Left colon (tissue), 2 donors: ENCODE measurements at regions of chr1 and their contacts with region 1.

Region 1: DNA sequence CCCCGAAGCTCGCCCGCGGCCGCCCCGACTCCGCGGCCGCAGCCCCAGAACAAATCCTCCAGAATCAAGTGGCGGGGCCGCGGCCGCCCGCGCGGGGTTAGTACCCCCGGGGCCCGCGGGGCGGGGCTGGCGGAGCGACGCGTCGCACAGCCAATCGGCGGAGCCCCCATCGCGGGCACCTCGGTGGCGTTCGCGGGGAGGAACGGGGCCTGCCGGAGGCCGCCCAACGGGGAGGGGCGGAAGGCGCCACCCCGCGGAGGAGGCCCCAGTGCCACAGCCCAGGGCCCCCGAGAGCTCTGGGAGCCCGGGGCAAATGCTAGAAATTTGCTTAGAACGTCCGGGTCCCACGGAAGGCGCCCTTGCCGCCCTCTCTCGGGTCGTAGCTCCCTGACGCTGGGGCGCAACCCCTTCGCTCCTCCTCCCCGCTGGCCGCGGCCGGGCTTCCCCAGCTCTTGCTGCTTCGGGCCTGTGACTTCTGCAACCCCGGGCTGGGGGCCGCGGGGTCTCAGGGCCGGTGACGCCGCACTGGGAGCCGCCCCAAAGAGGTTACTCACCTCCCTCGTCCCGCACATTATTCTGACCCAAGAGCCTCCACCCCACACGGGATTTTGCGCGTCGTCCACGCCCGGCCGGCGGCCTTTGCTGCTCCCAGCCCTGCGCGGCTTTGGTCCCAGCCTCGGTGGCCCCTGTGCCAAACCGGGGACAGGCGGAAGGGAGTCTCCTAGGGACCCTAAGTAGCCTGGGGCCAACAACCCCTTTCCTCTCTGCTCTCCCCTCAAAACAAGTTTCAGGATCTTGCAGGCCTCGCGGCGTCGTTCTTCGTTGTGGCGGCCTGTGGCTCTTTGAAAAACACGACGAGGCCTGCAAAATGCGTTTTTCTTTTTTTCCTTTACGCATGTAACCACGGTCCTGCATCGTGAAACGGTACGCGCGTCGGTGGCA is at the start of gene RUNX3:
- DNase-seq: peak; percentile 60 to 78
- ATAC-seq: peak; percentile 50
- total RNA-seq, gene RUNX3: 1.6 to 5.7 TPM

Region 2: DNA sequence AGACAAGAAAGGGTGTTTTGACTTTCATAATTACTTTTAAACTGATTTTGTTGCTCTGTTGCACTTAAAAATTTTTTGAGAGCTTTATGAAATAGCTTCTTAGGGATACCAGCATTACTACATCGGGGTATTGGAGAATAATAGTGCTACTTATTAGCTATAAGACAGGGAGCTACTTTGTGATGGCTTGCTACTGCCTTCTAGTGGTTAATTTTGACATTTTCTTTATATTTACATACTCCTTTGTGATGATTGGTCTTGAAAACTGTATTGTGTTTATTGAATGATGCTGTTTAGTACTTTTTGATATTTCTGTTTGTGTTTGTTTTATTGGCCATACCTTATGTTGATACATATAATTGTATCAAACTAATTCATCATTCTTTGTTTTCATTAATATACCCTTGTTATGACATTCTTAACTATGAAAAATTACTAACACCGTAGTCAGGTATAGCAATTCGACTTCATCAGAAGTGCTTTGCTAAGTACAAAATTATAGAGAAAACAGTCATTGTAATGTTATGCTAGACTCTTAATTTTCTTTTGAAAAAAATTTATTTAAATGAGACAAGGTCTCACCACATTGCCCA is 99.7 kb before region 1 on chr1:
- intact Hi-C with region 1: no loop called
- DNase-seq: no peak
- ATAC-seq: peak; percentile 50

Region 3: DNA sequence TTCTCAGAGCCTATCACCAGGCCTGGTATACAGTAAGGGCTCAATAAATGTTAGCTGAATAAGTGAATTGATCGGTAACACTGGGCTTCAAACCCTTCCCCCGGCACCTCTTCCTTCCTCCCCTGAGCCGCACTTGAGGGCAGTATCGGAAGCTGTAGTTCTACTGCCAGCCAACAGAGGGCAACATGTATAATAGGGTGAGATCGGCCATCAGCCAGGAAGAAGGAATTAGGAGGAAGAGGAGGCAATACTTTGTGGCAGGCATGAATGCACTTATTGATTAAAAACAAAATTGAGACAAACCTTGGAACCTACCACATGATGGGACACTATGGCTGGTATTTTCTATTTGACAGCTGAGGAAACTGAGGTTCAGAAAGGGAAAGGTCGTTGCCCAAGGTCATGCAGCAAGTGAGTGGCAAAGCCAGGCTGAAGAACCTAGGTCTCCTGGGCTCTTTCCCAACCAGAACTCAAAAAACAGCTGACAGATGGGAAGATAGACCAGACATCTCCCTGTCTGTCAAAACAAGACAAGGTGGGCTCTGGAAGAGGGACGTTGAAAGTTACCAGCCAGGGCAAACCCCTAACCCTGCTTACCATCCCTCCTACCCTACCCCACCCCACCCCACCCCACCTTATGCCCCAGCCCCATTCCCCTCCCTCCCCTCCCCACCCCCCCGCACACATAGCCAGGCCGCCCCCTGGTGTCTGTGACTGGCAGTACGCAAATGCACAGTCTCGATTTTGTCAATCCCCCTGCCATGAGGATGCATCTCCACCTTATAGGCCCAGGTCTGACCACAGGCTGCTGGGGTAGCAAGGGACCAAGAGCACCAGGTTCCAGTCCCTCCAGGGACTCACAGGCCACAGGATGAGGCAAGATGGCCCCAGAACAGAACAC is 106.9 kb after region 1 on chr1:
- intact Hi-C with region 1: loop called (anchors 10 kb)
- DNase-seq: peak in 1 of 2 donors; percentile 55
- ATAC-seq: peak; percentile 56

Region 4: GRCh38 chr1:25204797-25205480 is 274.5 kb after region 1 on chr1:
- intact Hi-C with region 1: loop called in 1 of 2 experiments (anchors 10 kb)
- DNase-seq: no peak
- ATAC-seq: peak; percentile 33

Region 5: DNA sequence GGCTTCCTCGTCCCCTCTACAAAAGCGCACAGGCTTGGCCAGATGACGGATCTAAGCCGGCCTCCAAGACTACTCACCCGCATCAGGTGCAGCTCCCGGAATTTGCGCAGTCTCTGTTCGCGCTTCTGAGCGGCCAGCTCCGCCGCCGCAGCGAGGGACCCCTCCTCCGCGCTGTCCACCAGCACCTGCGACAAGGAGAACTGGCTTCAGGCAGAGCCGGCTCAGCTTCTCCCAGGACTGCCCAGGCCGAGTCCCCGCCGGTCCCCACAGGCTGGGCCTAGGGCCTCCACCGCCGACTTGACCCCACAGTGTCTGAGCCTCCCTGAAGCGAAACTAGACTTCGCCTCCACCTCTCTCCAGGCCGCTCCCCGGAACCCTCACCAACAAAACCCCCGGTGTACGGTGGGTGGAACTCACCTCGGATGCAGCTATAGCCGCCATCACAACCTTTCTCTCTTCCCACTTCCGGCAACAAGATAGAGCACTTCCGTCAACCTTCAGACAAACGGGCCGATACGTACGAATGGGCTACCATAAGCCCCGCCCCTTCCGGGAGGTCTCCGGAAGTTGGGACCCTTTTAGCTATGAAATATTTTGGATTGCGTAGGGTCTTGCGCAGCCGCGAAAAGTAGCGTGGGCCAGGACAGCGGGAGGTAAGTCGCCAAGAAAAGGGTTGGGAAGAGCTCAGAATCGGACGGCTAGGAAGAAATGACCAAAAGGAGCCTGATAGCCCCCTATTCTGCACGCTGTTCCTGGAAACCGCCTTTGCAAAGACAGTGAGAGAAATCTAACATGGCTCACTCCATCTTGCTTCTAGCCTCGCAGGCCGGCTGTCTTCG is 301.8 kb after region 1 on chr1 and contains the start of gene SYF2:
- intact Hi-C with region 1: no loop called
- DNase-seq: peak; percentile 92 to 94
- ATAC-seq: peak; percentile 89
- total RNA-seq, gene SYF2: 46.3 to 49.8 TPM